CD4-positive, alpha-beta T cell (primary cell): ENCODE measurements at regions of chr20 and their contacts with region 1.

Region 1: DNA sequence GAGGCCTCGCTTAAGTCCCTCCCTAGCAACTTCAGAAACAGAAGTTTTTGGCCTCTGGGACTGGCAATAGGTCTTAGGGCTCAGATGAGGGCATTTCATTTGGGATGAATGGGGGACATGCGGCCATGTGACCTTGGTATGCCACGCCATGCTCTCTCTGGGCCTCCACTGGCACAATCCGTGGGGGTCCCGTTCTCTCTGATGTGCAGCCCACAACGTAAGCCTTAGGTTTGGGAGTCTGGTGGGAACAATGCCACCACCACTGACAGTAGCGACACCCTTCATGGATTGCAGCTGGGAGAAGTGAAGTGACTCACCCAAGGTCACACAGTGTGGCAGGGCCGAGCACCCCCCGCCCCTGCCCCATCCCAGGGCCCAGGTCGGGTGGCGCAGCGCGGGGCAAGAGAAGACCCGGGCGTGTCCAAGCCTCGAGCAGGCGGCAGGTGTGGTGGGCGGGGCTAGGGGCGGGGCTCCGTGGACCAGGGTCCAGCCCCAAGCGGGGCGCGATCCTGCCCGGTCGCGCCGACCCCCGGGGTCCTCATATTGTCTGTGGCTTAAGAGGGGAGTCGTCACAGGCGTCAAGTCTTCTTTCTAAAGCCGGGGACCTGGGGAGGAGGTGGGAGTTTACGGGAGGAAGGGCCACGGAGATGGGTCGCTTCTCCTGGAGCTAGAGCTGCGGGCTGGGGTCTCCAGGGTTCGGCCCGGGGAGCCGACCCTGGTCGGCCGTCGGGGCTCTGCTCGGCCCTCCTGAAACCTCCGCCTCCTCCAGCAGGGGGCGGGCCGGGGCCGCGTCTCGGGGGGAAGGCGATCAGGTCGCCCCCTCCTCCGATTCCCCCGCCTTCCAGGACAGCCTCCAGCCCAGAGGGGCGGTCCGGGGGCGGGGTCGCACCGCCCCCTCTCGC is 698 bp upstream of the CEBPB start:
- DNase-seq: peak; percentile 73 to 91 (median 80)
- ATAC-seq: peak; percentile 54
- H3K4me3 ChIP-seq: peak overlapping the region; percentile 75
- H3K4me3 Mint-ChIP-seq: peak overlapping the region; percentile 76
- H3K27ac ChIP-seq: no peak overlapping the region
- H3K27ac Mint-ChIP-seq: peak overlapping the region; percentile 42
- H3K4me1 ChIP-seq: peaks cover 38% of the 10 kb centered on the region
- H3K4me1 Mint-ChIP-seq: peaks cover 21% of the 10 kb centered on the region
- H3K27me3 ChIP-seq: peaks cover 0 to 5% of the 10 kb centered on the region in 2 experiments
- H3K27me3 Mint-ChIP-seq: peaks cover 10% of the 10 kb centered on the region
- CTCF ChIP-seq: peak; percentile 61

Region 2: DNA sequence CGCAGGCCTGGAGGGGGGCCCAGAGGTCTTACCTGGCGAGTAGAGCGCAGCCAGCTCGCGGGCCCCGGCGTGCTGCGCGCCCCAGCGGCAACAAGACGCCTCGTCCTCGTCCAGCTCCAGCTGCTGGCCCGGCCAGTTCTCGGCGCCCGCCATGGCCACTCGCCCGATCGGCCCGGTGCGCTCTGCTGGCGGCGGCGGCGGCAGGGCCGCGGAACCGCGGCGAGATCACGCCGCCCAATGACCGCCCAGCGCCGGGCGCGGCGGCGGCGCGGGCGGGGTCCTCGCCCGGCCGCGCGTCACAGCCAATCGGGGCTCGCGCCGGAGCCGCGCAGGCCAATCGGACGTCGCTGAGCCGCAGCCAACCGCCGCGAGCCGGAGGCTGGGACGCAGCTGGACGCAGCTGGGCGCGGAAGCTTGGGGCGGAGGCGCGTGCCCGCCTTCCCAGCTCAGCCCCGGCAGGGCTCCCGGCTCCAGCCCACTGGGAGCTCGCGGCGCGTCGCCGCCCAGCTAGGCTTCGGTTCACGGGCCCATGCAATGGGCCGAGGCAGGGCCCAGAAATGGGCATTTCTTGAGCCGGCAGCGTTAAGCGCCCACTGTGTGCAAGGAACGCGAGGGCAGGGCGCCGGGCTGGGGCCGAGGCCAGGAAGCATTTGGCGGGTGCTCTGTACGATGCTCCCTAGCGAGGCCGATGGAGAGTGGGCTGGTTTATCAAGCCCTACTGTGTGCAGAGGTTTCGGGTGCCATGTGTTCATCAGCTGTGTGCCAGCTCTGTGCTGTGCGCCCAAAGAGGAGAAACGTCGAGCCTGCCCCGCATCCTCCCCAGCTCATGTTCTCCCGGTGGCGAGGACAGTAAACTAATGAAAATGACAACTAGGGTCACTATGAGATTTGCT is 36.2 kb before region 1 on chr20 and contains the start of gene PEDS1:
- CTCF ChIA-PET with region 1: no interaction called
- POLR2A ChIA-PET with region 1: interaction called, 18 read pairs
- intact Hi-C with region 1: loop called in 1 of 2 experiments (anchors 1 kb)
- DNase-seq: peak; percentile 59 to 93 (median 78)
- ATAC-seq: peak; percentile 95
- H3K4me3 ChIP-seq: peak within 1 kb of the TSS; percentile 96
- H3K4me3 Mint-ChIP-seq: peak within 1 kb of the TSS; percentile 94
- H3K27ac ChIP-seq: peak within 1 kb of the TSS; percentile 70 to 75
- H3K27ac Mint-ChIP-seq: peak within 1 kb of the TSS; percentile 99
- H3K4me1 ChIP-seq: peaks cover 51% of the 10 kb centered on the region
- H3K4me1 Mint-ChIP-seq: peaks cover 51% of the 10 kb centered on the region
- H3K27me3 ChIP-seq: no peaks in the 10 kb centered on the region
- H3K27me3 Mint-ChIP-seq: no peaks in the 10 kb centered on the region
- CTCF ChIP-seq: no peak
- total RNA-seq, gene PEDS1: 21.3 to 21.9 TPM

Region 3: GRCh38 chr20:50385733-50386640 is 196.1 kb after region 1 on chr20:
- CTCF ChIA-PET with region 1: no interaction called
- POLR2A ChIA-PET with region 1: interaction called, 3 read pairs
- intact Hi-C with region 1: loop called in 1 of 2 experiments (anchors 5 kb)
- DNase-seq: peak in 12 of 14 experiments; percentile 12 to 86 (median 40)
- ATAC-seq: peak; percentile 82
- H3K4me3 ChIP-seq: peak overlapping the region; percentile 25
- H3K4me3 Mint-ChIP-seq: peak overlapping the region; percentile 57
- H3K27ac ChIP-seq: no peak overlapping the region
- H3K27ac Mint-ChIP-seq: peak overlapping the region; percentile 68
- H3K4me1 ChIP-seq: peaks cover 59% of the 10 kb centered on the region
- H3K4me1 Mint-ChIP-seq: peaks cover 68% of the 10 kb centered on the region
- H3K27me3 ChIP-seq: no peaks in the 10 kb centered on the region
- H3K27me3 Mint-ChIP-seq: no peaks in the 10 kb centered on the region
- CTCF ChIP-seq: no peak

Region 4: GRCh38 chr20:50460460-50461267 is 270.7 kb after region 1 on chr20:
- CTCF ChIA-PET with region 1: interaction called, 12 read pairs
- POLR2A ChIA-PET with region 1: interaction called, 4 read pairs
- intact Hi-C with region 1: loop called (anchors 1 kb)
- DNase-seq: peak; percentile 70 to 85 (median 76)
- ATAC-seq: peak; percentile 91
- H3K4me3 ChIP-seq: no peak overlapping the region
- H3K4me3 Mint-ChIP-seq: no peak overlapping the region
- H3K27ac ChIP-seq: no peak overlapping the region
- H3K27ac Mint-ChIP-seq: no peak overlapping the region
- H3K4me1 ChIP-seq: peaks cover 7% of the 10 kb centered on the region
- H3K4me1 Mint-ChIP-seq: no peaks in the 10 kb centered on the region
- H3K27me3 ChIP-seq: peaks cover 0 to under 1% of the 10 kb centered on the region in 2 experiments
- H3K27me3 Mint-ChIP-seq: no peaks in the 10 kb centered on the region
- CTCF ChIP-seq: peak; percentile 75

Region 5: DNA sequence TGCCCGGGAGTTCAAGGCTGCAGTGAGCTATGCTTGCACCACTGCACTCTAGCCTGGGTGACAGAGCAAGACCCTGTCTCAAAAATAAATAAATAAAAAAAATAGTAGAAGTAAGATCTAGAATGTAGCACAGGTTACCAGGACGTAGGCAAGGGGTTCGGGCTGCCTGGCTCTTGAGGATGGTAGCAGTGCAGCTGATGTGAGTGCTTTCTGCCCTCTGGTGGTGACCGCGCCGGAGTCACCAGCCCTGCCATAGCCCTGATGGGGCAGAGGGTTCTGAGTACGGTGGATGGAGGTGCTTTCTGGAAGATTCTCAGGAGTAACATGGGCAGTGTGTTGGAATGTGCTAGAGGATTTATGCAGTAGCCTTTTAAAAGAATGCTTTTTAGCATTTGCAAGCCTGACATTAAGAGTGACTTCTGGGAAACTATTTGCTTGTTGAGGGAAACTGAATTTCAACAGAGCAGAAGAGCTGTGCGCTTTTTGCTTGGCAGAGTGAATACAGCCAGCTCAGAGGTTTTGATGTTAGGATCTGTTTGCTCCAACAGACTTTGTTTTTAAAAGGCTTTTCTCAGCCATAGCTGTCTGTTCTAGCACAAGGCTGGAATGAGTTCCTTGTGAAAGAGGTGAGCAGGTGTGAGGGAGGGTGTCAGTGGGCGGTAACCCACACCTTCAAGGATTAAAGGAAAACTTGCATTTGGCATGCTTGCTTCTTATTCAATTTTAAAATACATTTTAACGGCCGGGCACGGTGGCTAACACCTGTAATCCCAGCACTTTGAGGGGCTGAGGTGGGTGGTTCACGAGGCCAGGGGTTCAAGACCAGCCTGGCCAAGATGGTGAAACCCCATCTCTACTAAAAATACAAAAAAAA is 386.2 kb after region 1 on chr20:
- CTCF ChIA-PET with region 1: interaction called, 4 read pairs
- POLR2A ChIA-PET with region 1: no interaction called
- intact Hi-C with region 1: loop called (anchors 2 kb)
- DNase-seq: peak; percentile 46 to 79 (median 62)
- ATAC-seq: peak; percentile 86
- H3K4me3 ChIP-seq: no peak overlapping the region
- H3K4me3 Mint-ChIP-seq: no peak overlapping the region
- H3K27ac ChIP-seq: no peak overlapping the region
- H3K27ac Mint-ChIP-seq: peak overlapping the region; percentile 47
- H3K4me1 ChIP-seq: peaks cover 7% of the 10 kb centered on the region
- H3K4me1 Mint-ChIP-seq: peaks cover 42% of the 10 kb centered on the region
- H3K27me3 ChIP-seq: no peaks in the 10 kb centered on the region
- H3K27me3 Mint-ChIP-seq: no peaks in the 10 kb centered on the region
- CTCF ChIP-seq: peak; percentile 68

Region 6: GRCh38 chr20:50750145-50750671 is 560.3 kb after region 1 on chr20:
- CTCF ChIA-PET with region 1: no interaction called
- POLR2A ChIA-PET with region 1: no interaction called
- intact Hi-C with region 1: loop called (anchors 1 to 10 kb)
- DNase-seq: no peak
- ATAC-seq: no peak
- H3K4me3 ChIP-seq: no peak overlapping the region
- H3K4me3 Mint-ChIP-seq: no peak overlapping the region
- H3K27ac ChIP-seq: no peak overlapping the region
- H3K27ac Mint-ChIP-seq: no peak overlapping the region
- H3K4me1 ChIP-seq: no peaks in the 10 kb centered on the region
- H3K4me1 Mint-ChIP-seq: peaks cover 13% of the 10 kb centered on the region
- H3K27me3 ChIP-seq: no peaks in the 10 kb centered on the region
- H3K27me3 Mint-ChIP-seq: no peaks in the 10 kb centered on the region
- CTCF ChIP-seq: no peak

Region 7: GRCh38 chr20:50762435-50763201 is 572.7 kb after region 1 on chr20:
- CTCF ChIA-PET with region 1: no interaction called
- POLR2A ChIA-PET with region 1: no interaction called
- intact Hi-C with region 1: loop called in 1 of 2 experiments (anchors 10 kb)
- DNase-seq: no peak
- ATAC-seq: no peak
- H3K4me3 ChIP-seq: no peak overlapping the region
- H3K4me3 Mint-ChIP-seq: no peak overlapping the region
- H3K27ac ChIP-seq: no peak overlapping the region
- H3K27ac Mint-ChIP-seq: no peak overlapping the region
- H3K4me1 ChIP-seq: no peaks in the 10 kb centered on the region
- H3K4me1 Mint-ChIP-seq: no peaks in the 10 kb centered on the region
- H3K27me3 ChIP-seq: no peaks in the 10 kb centered on the region
- H3K27me3 Mint-ChIP-seq: no peaks in the 10 kb centered on the region
- CTCF ChIP-seq: no peak